ENCODE measurements at regions of chr6 and their contacts with region 1.

Region 1: DNA sequence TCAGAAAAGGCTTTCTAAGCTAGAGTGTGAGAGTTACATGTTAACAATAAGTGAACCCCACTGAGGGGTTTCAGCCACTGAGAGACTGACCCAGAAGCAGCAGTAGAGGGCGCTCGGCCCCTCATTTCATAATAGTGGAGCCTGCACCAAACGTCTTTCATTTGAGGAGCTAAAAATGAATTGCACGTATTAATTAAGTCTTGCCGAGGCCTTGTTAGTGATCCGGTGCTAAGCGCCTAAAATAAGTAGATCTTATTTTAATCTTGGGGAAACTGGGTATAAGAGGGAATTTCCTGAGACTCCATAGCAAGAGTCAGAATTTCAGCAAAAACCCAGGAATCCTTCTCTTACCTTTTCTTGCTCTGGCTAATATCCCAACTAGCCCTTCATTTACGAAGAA is 209.7 kb downstream of the FARS2 start:
- DNase-seq: peak; percentile 70
- H3K4me3 Mint-ChIP-seq: no peak overlapping the region
- H3K27ac Mint-ChIP-seq: no peak overlapping the region
- H3K4me1 Mint-ChIP-seq: no peaks in the 10 kb centered on the region
- H3K27me3 Mint-ChIP-seq: no peaks in the 10 kb centered on the region

Region 2: DNA sequence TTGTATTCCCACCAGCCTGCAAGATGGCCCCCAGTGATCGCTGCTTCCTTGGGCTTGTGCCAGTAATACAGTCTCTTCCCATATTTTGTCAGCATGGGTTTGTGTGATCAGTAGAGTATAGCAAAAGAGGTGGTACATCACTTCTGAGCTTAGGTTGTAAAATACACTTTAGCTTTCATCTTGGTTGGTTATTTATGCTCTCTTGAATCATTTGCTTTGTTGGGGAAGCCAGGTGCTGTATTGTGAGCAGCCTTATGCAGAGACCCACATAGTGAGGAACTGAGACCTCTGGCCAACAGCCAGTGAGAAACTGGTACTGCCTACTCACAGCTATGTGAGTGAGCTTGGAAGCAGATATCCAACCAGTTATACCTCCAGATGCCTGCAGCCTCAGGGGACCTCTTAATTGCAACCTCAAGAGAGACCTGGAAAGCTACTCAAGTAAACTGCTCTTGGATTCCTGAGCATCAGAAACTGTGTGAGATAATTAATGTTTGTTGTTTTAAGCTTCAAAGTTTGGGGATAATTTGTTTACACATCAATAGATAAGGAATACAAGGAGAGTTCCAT is 19.5 kb after region 1 on chr6:
- CTCF ChIA-PET with region 1: interaction called, 10 read pairs
- POLR2A ChIA-PET with region 1: no interaction called
- intact Hi-C with region 1: no loop called
- DNase-seq: no peak
- H3K4me3 Mint-ChIP-seq: no peak overlapping the region
- H3K27ac Mint-ChIP-seq: no peak overlapping the region
- H3K4me1 Mint-ChIP-seq: peaks cover 3% of the 10 kb centered on the region
- H3K27me3 Mint-ChIP-seq: no peaks in the 10 kb centered on the region